Activated CD4-positive, alpha-beta T cell treated with anti-CD3 and anti-CD28 coated beads, Interleukin-2, amount 10 ng/mL, durations not matched to agents 7 days and 5 days (primary cell): ENCODE measurements at regions of chr16 and their contacts with region 1.

Region 1: GRCh38 chr16:79047229-79047983 is 553.1 kb downstream of the MAF start:
- DNase-seq: peak; percentile 17
- H3K4me3 Mint-ChIP-seq: no peak overlapping the region
- H3K27ac Mint-ChIP-seq: no peak overlapping the region
- H3K4me1 Mint-ChIP-seq: peaks cover 17% of the 10 kb centered on the region
- H3K27me3 Mint-ChIP-seq: no peaks in the 10 kb centered on the region

Region 2: GRCh38 chr16:79027467-79027866 is 19.9 kb before region 1 on chr16:
- CTCF ChIA-PET with region 1: no interaction called
- POLR2A ChIA-PET with region 1: no interaction called
- DNase-seq: no peak
- H3K4me3 Mint-ChIP-seq: no peak overlapping the region
- H3K27ac Mint-ChIP-seq: no peak overlapping the region
- H3K4me1 Mint-ChIP-seq: no peaks in the 10 kb centered on the region
- H3K27me3 Mint-ChIP-seq: no peaks in the 10 kb centered on the region

Region 3: DNA sequence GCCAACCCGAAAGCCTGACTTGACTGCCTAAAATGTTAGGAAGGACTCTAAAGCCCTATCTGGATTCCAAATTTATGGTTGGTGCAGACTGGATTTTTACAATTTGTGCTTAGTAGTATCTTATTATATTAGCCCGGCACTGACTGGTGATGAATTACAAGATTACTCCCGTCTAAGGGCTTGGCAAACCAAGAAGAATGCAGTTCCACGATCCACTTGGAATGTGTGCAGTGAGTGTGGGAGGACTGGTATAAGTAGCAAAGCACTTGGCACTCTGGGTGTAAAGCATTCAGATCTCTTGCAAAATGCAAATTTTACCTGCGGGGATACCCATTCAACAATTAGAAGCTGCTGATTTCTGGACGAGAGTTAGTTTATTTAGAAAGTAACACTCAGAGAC is 13.8 kb after region 1 on chr16:
- CTCF ChIA-PET with region 1: interaction called, 14 read pairs
- POLR2A ChIA-PET with region 1: no interaction called
- DNase-seq: no peak
- H3K4me3 Mint-ChIP-seq: no peak overlapping the region
- H3K27ac Mint-ChIP-seq: no peak overlapping the region
- H3K4me1 Mint-ChIP-seq: no peaks in the 10 kb centered on the region
- H3K27me3 Mint-ChIP-seq: peaks cover 3% of the 10 kb centered on the region